ENCODE measurements at regions of chr12 and their contacts with region 1.

Region 1: DNA sequence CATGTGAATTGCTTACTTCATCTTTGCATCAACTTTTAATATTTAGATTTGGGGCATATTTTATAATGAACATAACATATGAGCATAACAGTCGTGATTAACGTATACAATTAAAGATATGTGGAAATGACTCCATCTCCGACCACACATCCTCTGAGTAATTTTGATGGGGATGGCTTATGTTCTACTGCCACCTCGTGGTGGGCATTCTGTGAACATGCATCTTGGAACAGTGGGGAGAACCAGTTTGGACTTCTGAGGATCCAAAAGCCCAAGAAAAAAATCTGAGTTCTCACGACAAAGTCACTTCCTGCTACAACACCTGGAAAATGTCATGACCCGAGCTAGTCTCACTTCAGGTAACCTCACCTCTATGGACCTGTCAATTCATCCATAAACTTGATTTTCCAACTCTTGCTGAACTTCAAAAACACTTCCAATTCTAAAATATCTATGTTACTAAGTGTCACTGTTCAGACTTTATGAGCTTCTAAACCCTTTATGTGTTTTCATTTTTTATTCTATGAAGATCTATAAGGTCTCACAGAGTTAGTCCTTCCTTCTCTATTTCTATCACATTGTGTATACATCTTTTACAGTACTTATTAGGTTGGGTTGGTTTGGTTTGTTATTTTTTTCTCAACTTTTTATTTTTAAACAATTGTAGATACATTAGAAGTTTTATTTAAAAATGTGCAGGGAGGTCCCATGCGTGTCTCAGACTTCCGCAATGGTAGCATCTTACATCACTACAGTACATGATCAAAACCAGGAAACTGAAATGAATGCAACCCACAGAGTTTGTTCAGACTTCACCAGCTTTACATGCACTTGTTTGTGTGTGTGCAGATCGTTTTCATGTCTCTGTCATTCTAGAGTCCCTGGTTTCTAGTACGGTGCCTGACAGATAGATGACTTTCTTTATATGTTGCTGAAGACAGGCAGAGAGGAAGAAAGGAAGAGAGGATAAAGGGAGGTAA is 38.2 kb upstream of the STAB2 start:
- DNase-seq: peak in 1 of 2 donors; percentile 51
- ATAC-seq: peak in 5 of 8 donors; percentile 38 to 73 (median 66)
- H3K4me3 ChIP-seq: no peak overlapping the region
- H3K27ac ChIP-seq: no peak overlapping the region
- H3K4me1 ChIP-seq: no peaks in the 10 kb centered on the region
- H3K27me3 ChIP-seq: peaks cover 0 to 27% (median 7%) of the 10 kb centered on the region in 7 donors
- CTCF ChIP-seq: peak; percentile 57 to 85 (median 78)

Region 2: GRCh38 chr12:102883204-102883799 is 665.6 kb before region 1 on chr12:
- intact Hi-C with region 1: loop called (anchors 2 to 5 kb)
- DNase-seq: peak; percentile 20 to 36
- ATAC-seq: peak in 2 of 8 donors; percentile 48 to 63
- H3K4me3 ChIP-seq: no peak overlapping the region
- H3K27ac ChIP-seq: no peak overlapping the region
- H3K4me1 ChIP-seq: peaks cover 0 to 6% (median 0%) of the 10 kb centered on the region in 9 donors
- H3K27me3 ChIP-seq: peaks cover 0 to 28% (median 12%) of the 10 kb centered on the region in 7 donors
- CTCF ChIP-seq: peak; percentile 50 to 83 (median 72)

Region 3: DNA sequence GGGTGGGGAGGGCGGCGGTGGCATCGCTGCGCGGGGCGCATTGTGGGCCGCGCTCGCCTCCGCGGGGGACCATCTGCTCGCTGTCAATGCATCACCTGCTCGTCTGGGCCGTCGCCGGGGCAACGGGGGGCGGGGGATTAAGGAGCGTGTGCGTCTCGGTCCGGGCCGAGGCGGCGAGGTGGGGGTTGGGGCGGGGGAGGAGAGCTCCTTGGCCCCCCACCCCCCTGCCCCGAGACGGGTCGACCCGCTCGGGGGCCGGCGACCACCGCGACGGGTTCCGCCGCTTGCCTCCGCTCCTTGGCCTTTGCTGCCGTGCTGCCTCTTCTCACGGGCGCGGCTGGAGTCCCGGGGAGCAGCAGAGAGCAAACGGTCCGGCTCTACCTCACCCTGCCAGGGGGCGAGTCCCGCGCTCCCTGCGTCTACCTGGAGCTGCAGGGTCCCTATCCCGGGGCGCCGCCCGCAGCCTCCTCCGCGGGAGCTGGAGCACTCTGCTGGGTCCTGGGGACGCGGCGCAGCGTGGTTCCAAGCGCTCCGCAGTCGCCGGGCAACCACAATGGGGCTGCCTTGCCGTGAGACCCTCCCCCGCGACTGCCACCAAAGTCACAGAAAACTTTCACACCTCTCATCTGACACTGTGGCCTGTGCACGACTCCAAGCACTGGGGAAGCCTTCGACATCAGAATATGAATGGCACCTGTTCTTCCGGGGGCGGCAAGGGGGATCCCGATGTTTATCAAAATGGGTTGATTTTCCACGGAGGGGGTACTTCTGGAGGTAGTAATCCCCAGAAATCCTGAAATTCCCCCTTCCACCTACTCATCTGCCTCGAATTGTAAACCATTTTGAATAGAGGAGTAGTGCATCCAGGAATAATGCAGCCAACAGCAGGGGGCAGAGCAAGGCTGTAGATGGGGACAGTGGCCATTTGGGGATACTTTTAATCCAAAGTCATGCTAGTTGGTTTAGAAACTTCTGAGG is 53.1 kb before region 1 on chr12 and contains the start of gene C12orf42:
- intact Hi-C with region 1: no loop called
- DNase-seq: no peak
- ATAC-seq: peak in 5 of 8 donors; percentile 39 to 55 (median 42)
- H3K4me3 ChIP-seq: peak within 1 kb of the TSS in 9 of 10 donors; percentile 22 to 51 (median 40)
- H3K27ac ChIP-seq: no peak within 1 kb of the TSS
- H3K4me1 ChIP-seq: peaks cover 0 to 11% (median 7%) of the 10 kb centered on the region in 9 donors
- H3K27me3 ChIP-seq: peaks cover 8 to 67% (median 52%) of the 10 kb centered on the region in 7 donors
- CTCF ChIP-seq: peak in 6 of 9 donors; percentile 27 to 45 (median 38)
- total RNA-seq, gene C12orf42: 0.21 TPM in 1 of 10 donors, not detected in the others

Region 4: DNA sequence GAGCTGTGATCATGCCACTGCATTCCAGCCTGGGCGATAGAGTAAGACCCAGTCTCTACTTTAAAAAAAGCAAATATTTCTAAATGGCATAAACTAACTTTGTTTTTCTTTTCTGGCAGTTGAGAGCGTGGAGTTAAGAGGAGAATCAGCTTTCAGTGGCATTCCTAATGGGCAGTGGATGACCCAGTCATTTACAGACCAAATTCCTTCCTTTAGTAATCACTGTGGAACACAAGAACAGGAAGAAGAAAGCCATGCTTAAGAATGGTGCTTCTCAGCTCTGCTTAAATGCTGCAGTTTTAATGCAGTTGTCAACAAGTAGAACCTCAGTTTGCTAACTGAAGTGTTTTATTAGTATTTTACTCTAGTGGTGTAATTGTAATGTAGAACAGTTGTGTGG is 437.9 kb after region 1 on chr12:
- intact Hi-C with region 1: no loop called
- DNase-seq: no peak
- ATAC-seq: no peak
- H3K4me3 ChIP-seq: no peak overlapping the region
- H3K27ac ChIP-seq: no peak overlapping the region
- H3K4me1 ChIP-seq: no peaks in the 10 kb centered on the region
- H3K27me3 ChIP-seq: no peaks in the 10 kb centered on the region
- CTCF ChIP-seq: no peak

Measured in heart right ventricle (tissue), 16 donors.